ENCODE measurements at regions of chr18 and their contacts with region 1.

Region 1: DNA sequence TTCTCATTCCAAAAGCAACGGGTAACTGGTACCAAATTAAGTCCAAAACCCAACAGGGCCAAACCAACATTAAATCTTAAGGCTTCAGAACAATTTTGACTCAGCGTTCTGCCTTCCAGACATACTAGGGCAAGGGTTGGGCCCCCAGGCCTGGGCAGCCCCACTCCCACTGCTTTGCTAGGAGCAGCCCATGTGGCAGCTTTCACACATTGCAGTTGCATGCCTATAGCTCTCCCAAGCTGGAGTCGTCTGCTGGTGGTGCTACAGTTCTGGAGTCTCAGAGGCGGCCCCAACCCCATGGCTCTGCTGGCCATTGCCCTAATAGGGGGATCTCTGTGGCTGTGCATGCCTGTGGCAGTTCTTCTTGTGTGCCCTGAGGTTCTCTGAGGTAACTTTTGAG is 37.6 kb upstream of the CD226 start:
- DNase-seq: no peak
- ATAC-seq: no peak
- H3K4me3 ChIP-seq: no peak overlapping the region
- H3K27ac ChIP-seq: no peak overlapping the region
- H3K4me1 ChIP-seq: peaks cover 0 to 16% (median 8%) of the 10 kb centered on the region in 9 donors
- H3K27me3 ChIP-seq: no peaks in the 10 kb centered on the region
- CTCF ChIP-seq: no peak

Region 2: GRCh38 chr18:69518989-69519388 is 466.2 kb before region 1 on chr18:
- intact Hi-C with region 1: loop called in 1 of 10 experiments (anchors 5 kb)
- DNase-seq: no peak
- ATAC-seq: no peak
- H3K4me3 ChIP-seq: no peak overlapping the region
- H3K27ac ChIP-seq: no peak overlapping the region
- H3K4me1 ChIP-seq: no peaks in the 10 kb centered on the region
- H3K27me3 ChIP-seq: no peaks in the 10 kb centered on the region
- CTCF ChIP-seq: no peak